H1 (cell line): ENCODE measurements at regions of chr19 and their contacts with region 1.

Region 1: GRCh38 chr19:17859533-17860330 is at the start of gene RPL18A:
- DNase-seq: peak; percentile 91 to 99
- H3K4me3 ChIP-seq: peak within 1 kb of the TSS; percentile 98 to 100 (median 99)
- H3K27ac ChIP-seq: peak within 1 kb of the TSS; percentile 94
- H3K4me1 ChIP-seq: peaks cover 0 to 13% (median 6%) of the 10 kb centered on the region in 4 experiments; a peak in 6 of 7 replicates
- H3K27me3 ChIP-seq: no peaks in the 10 kb centered on the region
- CTCF ChIP-seq: peak; percentile 81 to 93 (median 82)
- EP300 ChIP-seq: no peak; a peak in 1 of 3 replicates
- POLR2A ChIP-seq: peak; percentile 85 to 97
- RAD21 ChIP-seq: peak; percentile 76 to 79
- total RNA-seq, gene RPL18A: 2,749 and 2,894 TPM in 2 replicates

Region 2: DNA sequence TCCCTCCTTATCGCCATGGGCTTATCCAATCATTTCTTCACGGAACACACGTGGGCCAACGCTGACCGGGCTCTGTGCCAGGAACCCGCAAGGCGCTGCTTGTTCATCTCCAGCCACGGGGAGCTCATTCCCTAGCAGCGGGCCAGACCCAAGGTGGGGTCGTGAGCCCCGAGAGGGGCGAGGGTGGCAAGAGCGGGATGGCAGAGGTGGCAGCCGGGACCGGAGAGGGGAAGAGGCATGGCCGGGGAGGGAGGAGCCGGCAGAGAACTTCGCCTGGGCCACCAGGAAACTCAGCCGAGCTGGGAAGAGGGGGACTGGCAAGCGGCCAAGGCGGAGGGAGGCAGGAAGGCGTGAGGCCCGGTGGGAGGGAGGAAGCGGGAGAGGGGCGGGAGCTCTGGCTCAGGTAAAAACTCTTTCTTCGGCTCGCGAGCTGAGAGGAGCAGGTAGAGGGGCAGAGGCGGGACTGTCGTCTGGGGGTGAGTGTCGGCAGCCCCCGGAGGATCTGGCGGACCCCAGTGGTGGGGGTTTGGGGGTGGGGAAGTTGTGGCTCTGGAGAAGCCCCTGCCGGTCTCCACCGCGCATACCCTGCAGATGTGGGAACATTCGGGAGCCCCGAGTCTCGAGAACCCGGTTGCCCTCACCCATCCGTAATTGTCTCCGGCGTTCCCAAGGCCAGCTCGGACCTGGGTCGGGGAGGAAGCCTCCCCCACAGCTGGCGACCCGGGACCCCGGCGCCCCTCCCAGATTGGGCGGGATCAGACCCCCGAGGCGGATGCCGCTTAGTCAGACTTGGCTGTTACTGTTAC is 64.8 kb before region 1 on chr19 and contains the start of gene B3GNT3:
- CTCF ChIA-PET with region 1: interaction called, 8 read pairs
- POLR2A ChIA-PET with region 1: interaction called, 17 read pairs
- DNase-seq: peak in 1 of 2 experiments; percentile 81
- H3K4me3 ChIP-seq: peak within 1 kb of the TSS; percentile 40 to 69 (median 58)
- H3K27ac ChIP-seq: no peak within 1 kb of the TSS
- H3K4me1 ChIP-seq: peaks cover 0 to 6% (median 4%) of the 10 kb centered on the region in 4 experiments; a peak in 5 of 7 replicates
- H3K27me3 ChIP-seq: peaks cover 0 to 9% (median 7%) of the 10 kb centered on the region in 4 experiments; a peak in 6 of 7 replicates
- CTCF ChIP-seq: no peak
- EP300 ChIP-seq: no peak
- POLR2A ChIP-seq: no peak
- RAD21 ChIP-seq: no peak
- total RNA-seq, gene B3GNT3: 1.5 and 1.8 TPM in 2 replicates

Region 3: DNA sequence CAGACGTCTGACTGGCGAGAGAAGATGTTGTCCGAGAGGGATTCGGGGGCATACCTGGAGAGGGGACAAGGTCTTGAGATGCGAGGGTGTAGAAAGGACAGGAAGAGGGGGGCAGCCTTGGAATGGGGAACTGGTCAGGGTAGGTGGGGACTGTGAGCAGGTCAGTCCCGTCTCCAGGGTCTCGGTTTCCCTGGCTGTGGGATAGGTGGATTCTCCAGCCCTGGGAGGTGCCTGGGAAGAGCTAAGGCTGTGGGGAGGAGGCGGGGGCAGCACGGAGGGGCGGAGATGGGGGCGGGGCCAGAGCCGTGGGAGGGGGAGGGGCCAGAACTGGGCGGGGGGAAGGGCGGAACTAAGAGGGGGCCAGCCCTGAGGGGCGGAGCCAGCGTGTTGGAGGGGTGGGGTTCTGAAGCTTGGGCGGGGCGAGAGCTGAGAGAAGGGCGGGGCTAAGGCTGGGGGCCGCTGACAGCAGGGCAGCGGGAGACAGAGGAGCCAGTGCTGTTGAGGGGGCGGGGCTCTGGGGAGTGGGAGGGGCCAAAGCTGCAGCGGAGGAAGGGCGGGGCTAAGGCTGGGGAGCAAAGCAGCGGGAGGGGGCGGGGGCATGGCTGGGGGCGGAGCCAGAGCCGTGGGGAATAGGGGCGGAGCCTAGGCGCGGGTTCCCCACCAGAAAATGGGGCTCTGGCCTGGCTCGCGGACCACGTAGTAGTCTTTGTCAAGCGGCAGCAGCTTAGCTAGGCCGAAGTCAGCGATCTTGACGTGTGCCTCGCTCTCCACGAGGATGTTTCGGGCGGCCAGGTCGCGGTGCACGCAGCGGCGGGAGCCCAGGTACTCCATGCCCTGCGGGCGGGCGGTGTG is 28.9 kb before region 1 on chr19:
- CTCF ChIA-PET with region 1: interaction called, 19 read pairs
- POLR2A ChIA-PET with region 1: interaction called, 133 read pairs
- DNase-seq: peak; percentile 93 to 95
- H3K4me3 ChIP-seq: peak overlapping the region; percentile 66 to 93 (median 80)
- H3K27ac ChIP-seq: peak overlapping the region; percentile 82
- H3K4me1 ChIP-seq: peaks cover 0 to 15% (median 3%) of the 10 kb centered on the region in 4 experiments; a peak in 6 of 7 replicates
- H3K27me3 ChIP-seq: no peaks in the 10 kb centered on the region; a peak in 1 of 7 replicates
- CTCF ChIP-seq: no peak
- EP300 ChIP-seq: no peak
- POLR2A ChIP-seq: 0 out of 3 replicates have a peak, but pooled peaks of 1 of the 2 experiments have one; percentile 64
- RAD21 ChIP-seq: no peak

Region 4: DNA sequence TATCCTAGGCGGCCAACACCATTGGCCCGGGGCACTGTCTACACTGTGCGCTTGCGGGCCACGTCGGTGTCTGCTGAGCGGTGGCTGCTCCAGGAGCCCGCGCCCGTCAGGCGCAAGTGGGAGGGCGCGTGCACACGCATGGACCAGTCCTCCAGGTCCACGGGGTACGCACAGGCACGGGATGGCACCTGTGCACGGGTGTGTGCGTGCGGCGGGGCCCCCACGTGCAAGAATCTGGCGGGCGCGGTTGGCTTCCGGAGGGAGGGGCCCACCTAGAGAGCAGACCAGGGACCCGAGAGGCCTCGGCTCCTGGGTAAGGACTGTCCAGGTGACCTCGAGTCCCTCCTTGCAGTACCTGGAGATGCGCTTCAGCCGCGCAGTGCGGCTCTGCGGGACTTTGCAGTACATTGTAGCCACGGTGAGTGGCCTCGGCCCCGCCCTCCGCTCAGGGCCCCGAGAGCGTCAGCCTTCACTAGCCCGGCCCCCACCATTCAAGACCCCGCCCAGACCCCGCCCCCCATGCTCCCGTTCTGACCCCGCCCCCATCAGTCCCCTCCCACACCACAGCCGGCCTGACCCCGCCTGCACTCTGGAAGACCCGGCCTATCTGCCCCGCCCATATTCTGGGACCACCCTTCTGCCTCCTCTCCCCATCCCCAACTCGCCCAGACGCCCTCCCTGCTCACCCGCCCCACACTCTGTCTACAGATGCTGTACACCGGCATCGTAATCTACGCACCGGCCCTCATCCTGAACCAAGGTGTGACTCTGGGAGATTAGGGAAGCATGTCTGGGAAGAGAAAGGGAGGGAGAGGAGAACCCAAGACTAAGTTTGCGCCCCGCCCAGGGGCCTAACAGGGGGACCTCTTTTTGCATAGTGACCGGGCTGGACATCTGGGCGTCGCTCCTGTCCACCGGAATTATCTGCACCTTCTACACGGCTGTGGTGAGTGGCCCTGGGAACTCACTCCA is 14.3 kb after region 1 on chr19:
- CTCF ChIA-PET with region 1: interaction called, 16 read pairs
- POLR2A ChIA-PET with region 1: interaction called, 89 read pairs
- DNase-seq: peak in 1 of 2 experiments; percentile 91
- H3K4me3 ChIP-seq: peak overlapping the region; percentile 64 to 78 (median 72)
- H3K27ac ChIP-seq: no peak overlapping the region
- H3K4me1 ChIP-seq: peaks cover 0 to 6% (median under 1%) of the 10 kb centered on the region in 4 experiments; a peak in 3 of 7 replicates
- H3K27me3 ChIP-seq: peaks cover 0 to 9% (median 5%) of the 10 kb centered on the region in 4 experiments; a peak in 5 of 7 replicates
- CTCF ChIP-seq: 0 out of 4 replicates have a peak, but pooled peaks of 1 of the 3 experiments have one; percentile 1
- EP300 ChIP-seq: no peak
- POLR2A ChIP-seq: no peak
- RAD21 ChIP-seq: no peak

Region 5: GRCh38 chr19:17932485-17933338 is 73.0 kb after region 1 on chr19 and contains the start of gene CCDC124:
- CTCF ChIA-PET with region 1: interaction called, 14 read pairs
- POLR2A ChIA-PET with region 1: interaction called, 392 read pairs
- DNase-seq: peak; percentile 86 to 95
- H3K4me3 ChIP-seq: peak within 1 kb of the TSS; percentile 80 to 94 (median 91)
- H3K27ac ChIP-seq: peak within 1 kb of the TSS; percentile 96
- H3K4me1 ChIP-seq: peaks cover 0 to 4% (median 2%) of the 10 kb centered on the region in 4 experiments; a peak in 3 of 7 replicates
- H3K27me3 ChIP-seq: no peaks in the 10 kb centered on the region
- CTCF ChIP-seq: peak; percentile 93 to 97 (median 97)
- EP300 ChIP-seq: peak in 1 of 2 experiments; percentile 16; a peak in 1 of 3 replicates
- POLR2A ChIP-seq: no peak; a peak in 2 of 3 replicates
- RAD21 ChIP-seq: peak; percentile 97 to 98
- total RNA-seq, gene CCDC124: 101 and 103 TPM in 2 replicates